HepG2 (cell line): ENCODE measurements at regions of chr1 and their contacts with region 1.

Region 1: GRCh38 chr1:218366322-218367052 is 21.4 kb downstream of the TGFB2 start:
- DNase-seq: peak; percentile 86
- ATAC-seq: peak; percentile 66
- H3K4me3 ChIP-seq: no peak overlapping the region; a peak in 1 of 6 replicates
- H3K27ac ChIP-seq: peak overlapping the region; percentile 54
- H3K4me1 ChIP-seq: peaks cover 68% of the 10 kb centered on the region
- H3K27me3 ChIP-seq: no peaks in the 10 kb centered on the region
- CTCF ChIP-seq: no peak
- EP300 ChIP-seq: peak in 1 of 2 experiments; percentile 45; a peak in 1 of 4 replicates
- POLR2A ChIP-seq: no peak
- RAD21 ChIP-seq: no peak

Region 2: GRCh38 chr1:218380151-218380977 is 13.9 kb after region 1 on chr1:
- CTCF ChIA-PET with region 1: no interaction called
- POLR2A ChIA-PET with region 1: interaction called, 11 read pairs
- in situ Hi-C with region 1: no loop called
- intact Hi-C with region 1: loop called (anchors 1 kb)
- DNase-seq: peak; percentile 87
- ATAC-seq: peak; percentile 92
- H3K4me3 ChIP-seq: no peak overlapping the region; a peak in 1 of 6 replicates
- H3K27ac ChIP-seq: peak overlapping the region; percentile 10
- H3K4me1 ChIP-seq: peaks cover 58% of the 10 kb centered on the region
- H3K27me3 ChIP-seq: no peaks in the 10 kb centered on the region
- CTCF ChIP-seq: no peak
- EP300 ChIP-seq: peak in 1 of 2 experiments; percentile 28; a peak in 1 of 4 replicates
- POLR2A ChIP-seq: no peak
- RAD21 ChIP-seq: no peak

Region 3: DNA sequence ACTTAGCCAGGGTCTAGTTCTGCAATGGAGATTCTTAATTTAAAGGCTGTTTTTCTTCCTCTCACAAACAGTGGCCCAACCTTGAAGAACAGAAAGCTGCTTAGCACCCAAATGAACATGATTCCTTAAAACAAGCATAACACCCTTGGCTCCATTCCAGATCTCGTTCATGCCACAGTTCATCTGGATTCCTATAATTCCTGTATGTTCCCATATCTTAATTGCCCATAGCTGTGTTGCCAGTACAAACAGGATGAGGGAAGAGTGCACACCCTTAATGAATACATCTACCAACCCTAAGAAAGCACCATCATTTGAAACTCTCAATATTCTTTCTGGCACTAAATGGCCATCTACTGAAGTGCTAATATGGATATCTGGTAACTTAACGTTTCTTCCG is 24.1 kb after region 1 on chr1:
- CTCF ChIA-PET with region 1: no interaction called
- POLR2A ChIA-PET with region 1: no interaction called
- in situ Hi-C with region 1: no loop called
- intact Hi-C with region 1: no loop called
- DNase-seq: no peak
- ATAC-seq: no peak
- H3K4me3 ChIP-seq: no peak overlapping the region
- H3K27ac ChIP-seq: no peak overlapping the region
- H3K4me1 ChIP-seq: no peaks in the 10 kb centered on the region
- H3K27me3 ChIP-seq: no peaks in the 10 kb centered on the region
- CTCF ChIP-seq: no peak
- EP300 ChIP-seq: no peak
- POLR2A ChIP-seq: no peak
- RAD21 ChIP-seq: no peak

Region 4: DNA sequence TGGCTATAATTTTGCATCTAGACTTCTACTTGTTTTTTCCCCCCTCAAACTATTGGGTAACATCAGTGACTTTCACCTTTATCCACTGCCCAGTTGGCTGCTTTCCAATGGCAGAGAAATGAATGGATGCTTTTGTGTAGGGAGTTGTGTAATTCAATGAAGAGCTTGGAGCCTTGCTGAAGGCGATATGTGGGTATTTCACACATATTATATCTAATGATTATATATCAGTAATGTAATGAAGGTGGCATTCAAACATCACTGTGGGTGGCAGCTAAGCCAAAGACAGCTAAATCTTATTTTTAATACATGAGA is 59.8 kb after region 1 on chr1:
- CTCF ChIA-PET with region 1: no interaction called
- POLR2A ChIA-PET with region 1: no interaction called
- in situ Hi-C with region 1: no loop called
- intact Hi-C with region 1: loop called (anchors 1 kb)
- DNase-seq: peak; percentile 95
- ATAC-seq: peak; percentile 95
- H3K4me3 ChIP-seq: 0 out of 6 replicates have a peak overlapping the region, but pooled peaks of 1 of the 3 experiments have one; percentile 26
- H3K27ac ChIP-seq: peak overlapping the region; percentile 58
- H3K4me1 ChIP-seq: peaks cover 22% of the 10 kb centered on the region
- H3K27me3 ChIP-seq: no peaks in the 10 kb centered on the region; a peak in 1 of 5 replicates
- CTCF ChIP-seq: no peak
- EP300 ChIP-seq: peak; percentile 65 to 84; a peak in 2 of 4 replicates
- POLR2A ChIP-seq: no peak
- RAD21 ChIP-seq: no peak